Natural killer cell (primary cell): ENCODE measurements at regions of chr1 and their contacts with region 1.

Region 1: GRCh38 chr1:9196129-9197040 is 38.2 kb upstream of the H6PD start:
- DNase-seq: peak; percentile 26 to 74
- ATAC-seq: peak in 1 of 3 donors; percentile 64
- H3K4me3 ChIP-seq: no peak overlapping the region
- H3K4me3 Mint-ChIP-seq: no peak overlapping the region
- H3K27ac ChIP-seq: no peak overlapping the region
- H3K27ac Mint-ChIP-seq: no peak overlapping the region
- H3K4me1 ChIP-seq: peaks cover 6% of the 10 kb centered on the region
- H3K4me1 Mint-ChIP-seq: peaks cover 0 to 14% of the 10 kb centered on the region in 2 donors
- H3K27me3 ChIP-seq: peaks cover 30% of the 10 kb centered on the region
- H3K27me3 Mint-ChIP-seq: peaks cover 48 to 54% of the 10 kb centered on the region in 2 donors
- CTCF ChIP-seq: peak; percentile 49

Region 2: DNA sequence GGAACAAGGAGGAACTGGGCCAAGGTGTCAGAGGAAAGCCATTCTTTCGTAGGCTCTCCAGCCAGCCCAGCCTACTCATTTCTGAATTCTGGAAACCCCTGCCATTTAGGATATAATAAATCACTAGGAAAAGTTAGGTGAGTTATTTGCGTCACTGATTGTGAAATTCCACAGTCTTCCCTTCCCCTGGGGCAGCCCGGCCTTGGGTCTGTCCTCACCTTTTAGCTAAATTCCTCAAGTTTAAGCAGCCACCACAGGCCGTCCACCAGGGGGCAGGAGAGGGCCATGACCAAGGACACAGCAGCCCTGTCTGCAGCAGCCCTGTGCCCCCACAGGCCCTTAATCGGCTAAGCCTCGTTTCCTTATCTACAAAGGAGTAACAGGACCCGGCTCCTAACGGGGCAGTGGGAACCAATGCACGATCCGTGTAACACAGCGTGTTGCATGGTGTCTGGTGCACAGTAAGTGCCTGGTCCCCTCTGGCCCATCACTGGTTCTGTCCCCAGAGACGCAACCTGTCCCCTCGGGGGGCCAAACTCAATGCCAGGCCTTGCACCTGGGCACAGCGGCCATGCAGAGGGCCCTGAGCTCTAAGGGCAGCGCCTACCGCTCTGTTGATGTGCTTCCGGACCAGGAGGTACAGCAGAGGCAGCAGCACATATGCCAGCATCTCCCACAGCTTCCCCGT is 85.6 kb before region 1 on chr1:
- intact Hi-C with region 1: loop called (anchors 2 kb)
- DNase-seq: peak; percentile 71 to 88
- ATAC-seq: peak; percentile 78 to 87 (median 79)
- H3K4me3 ChIP-seq: no peak overlapping the region
- H3K4me3 Mint-ChIP-seq: no peak overlapping the region
- H3K27ac ChIP-seq: no peak overlapping the region
- H3K27ac Mint-ChIP-seq: no peak overlapping the region
- H3K4me1 ChIP-seq: no peaks in the 10 kb centered on the region
- H3K4me1 Mint-ChIP-seq: no peaks in the 10 kb centered on the region
- H3K27me3 ChIP-seq: no peaks in the 10 kb centered on the region
- H3K27me3 Mint-ChIP-seq: no peaks in the 10 kb centered on the region
- CTCF ChIP-seq: peak; percentile 76